Spleen (tissue), 13 donors: ENCODE measurements at regions of chr19 and their contacts with region 1.

Region 1: DNA sequence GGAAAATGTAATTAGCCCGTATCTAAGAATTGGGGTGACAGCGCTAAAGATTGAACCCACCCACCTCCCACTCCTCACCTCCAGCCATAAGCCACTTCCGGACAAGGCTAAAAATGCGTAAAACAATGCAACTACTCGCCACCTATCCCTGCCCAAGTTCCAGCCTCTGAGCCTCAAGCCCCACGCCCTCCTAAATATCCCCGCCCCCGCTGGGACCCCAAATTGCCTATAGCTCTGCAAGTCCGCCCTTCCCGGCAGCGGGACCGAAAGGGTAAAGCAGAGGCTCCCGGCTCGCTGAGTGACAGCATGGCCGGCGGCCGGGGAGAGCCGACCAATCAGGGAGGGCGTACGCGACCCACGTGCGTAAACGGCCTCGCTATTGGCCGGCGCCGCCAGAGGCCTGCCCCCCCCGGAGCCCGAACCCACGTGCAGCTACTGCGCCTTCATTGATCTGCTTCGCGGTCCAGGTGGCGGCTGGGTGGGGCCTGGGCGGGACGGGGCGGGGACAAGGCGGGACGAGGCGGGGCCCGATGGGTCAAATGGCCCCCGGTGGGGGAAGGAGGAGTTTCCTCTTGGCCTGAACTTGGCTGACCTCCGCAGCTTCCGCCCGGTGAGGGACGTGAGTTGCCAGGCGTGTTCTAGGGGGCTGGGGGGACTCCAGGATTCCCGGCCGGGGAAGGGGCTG is at the start of gene TLE6:
- DNase-seq: peak; percentile 95
- H3K4me3 ChIP-seq: peak within 1 kb of the TSS; percentile 14 to 74 (median 46)
- H3K27ac ChIP-seq: peak within 1 kb of the TSS in 7 of 8 donors; percentile 18 to 85 (median 72)
- H3K4me1 ChIP-seq: peaks cover 20 to 66% (median 53%) of the 10 kb centered on the region in 6 donors
- H3K27me3 ChIP-seq: peaks cover 0 to 31% (median 0%) of the 10 kb centered on the region in 7 donors
- CTCF ChIP-seq: no peak
- POLR2A ChIP-seq: no peak
- total RNA-seq, gene TLE6: 0.60 to 4.1 (median 1.4) TPM

Region 2: GRCh38 chr19:3035542-3036118 is 58.5 kb after region 1 on chr19:
- intact Hi-C with region 1: loop called (anchors 10 kb)
- DNase-seq: peak; percentile 94
- H3K4me3 ChIP-seq: peak overlapping the region; percentile 45 to 87 (median 58)
- H3K27ac ChIP-seq: peak overlapping the region; percentile 74 to 95 (median 91)
- H3K4me1 ChIP-seq: peaks cover 7 to 47% (median 23%) of the 10 kb centered on the region in 6 donors
- H3K27me3 ChIP-seq: peaks cover 0 to under 1% (median 0%) of the 10 kb centered on the region in 7 donors
- CTCF ChIP-seq: peak in 1 of 11 experiments; percentile 8
- POLR2A ChIP-seq: no peak